PC-9 (cell line): ENCODE measurements at regions of chr17 and their contacts with region 1.

Region 1: DNA sequence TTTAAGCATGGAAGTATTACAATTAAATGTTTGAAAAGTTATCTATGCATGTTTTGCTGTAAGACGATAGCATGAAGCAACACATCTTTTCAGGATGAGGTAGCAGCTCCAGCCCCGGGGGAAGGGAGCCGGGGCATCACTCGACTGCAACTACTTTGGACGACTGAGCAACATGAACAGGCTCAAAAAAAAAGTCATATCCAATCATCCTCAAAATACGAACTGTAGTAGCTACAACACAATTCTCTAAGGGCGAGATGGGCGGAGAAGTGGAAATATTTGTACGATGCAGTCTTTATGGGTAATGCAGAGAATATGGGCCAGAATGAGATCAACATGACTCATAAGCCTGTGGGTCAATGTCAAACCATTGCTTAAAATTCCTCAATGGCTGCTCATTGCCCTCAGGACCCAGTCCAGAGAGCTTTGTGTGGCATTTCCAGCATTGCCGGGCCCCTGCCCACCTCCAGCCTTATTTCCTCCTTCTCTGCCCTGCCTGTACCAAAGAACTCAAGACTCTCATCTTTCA is 17.6 kb upstream of the SMURF2 start:
- DNase-seq: peak; percentile 81 to 98
- H3K4me3 ChIP-seq: peak overlapping the region; percentile 42; the same call in 1 of the 2 replicates
- H3K27ac ChIP-seq: peak overlapping the region; percentile 96
- H3K4me1 ChIP-seq: peaks cover 57% of the 10 kb centered on the region
- H3K27me3 ChIP-seq: no peaks in the 10 kb centered on the region
- CTCF ChIP-seq: no peak

Region 2: DNA sequence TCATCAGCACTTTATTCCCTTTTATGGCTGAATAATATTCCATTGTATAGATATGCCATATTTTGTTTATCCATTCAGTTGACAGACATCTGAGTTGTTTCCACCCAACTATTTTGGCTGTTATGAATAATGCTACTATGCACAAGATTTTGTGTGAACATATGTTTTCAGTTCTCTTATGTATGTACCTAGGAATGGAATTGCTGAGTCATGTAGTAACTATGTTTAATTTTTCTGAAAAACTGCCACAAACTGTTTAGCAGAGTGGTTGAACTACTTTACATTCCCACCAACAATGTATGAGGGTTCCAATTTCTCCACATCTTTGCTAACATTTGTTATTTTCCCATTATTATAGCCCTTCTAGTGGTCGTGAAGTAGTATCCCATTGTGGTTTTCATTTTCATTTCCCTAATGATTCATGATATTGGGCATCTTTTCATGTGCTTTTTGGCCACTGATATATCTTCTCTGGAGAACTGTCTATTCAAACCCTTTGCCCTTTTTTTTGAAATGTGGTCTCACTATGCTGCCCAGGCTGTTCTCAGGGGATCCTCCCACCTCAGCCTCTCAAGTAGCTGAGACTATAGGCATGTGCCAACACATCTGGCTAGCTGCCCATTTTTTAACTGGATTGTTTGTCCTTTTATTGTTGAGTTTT is 44.0 kb before region 1 on chr17:
- CTCF ChIA-PET with region 1: no interaction called
- POLR2A ChIA-PET with region 1: interaction called, 15 read pairs
- intact Hi-C with region 1: no loop called
- DNase-seq: peak in 1 of 2 experiments; percentile 36
- H3K4me3 ChIP-seq: no peak overlapping the region
- H3K27ac ChIP-seq: peak overlapping the region; percentile 61
- H3K4me1 ChIP-seq: peaks cover 35% of the 10 kb centered on the region
- H3K27me3 ChIP-seq: no peaks in the 10 kb centered on the region
- CTCF ChIP-seq: no peak

Region 3: GRCh38 chr17:64694207-64694606 is 14.5 kb after region 1 on chr17:
- CTCF ChIA-PET with region 1: no interaction called
- POLR2A ChIA-PET with region 1: no interaction called
- intact Hi-C with region 1: loop called (anchors 2 kb)
- DNase-seq: peak; percentile 84 to 95
- H3K4me3 ChIP-seq: no peak overlapping the region
- H3K27ac ChIP-seq: peak overlapping the region; percentile 67
- H3K4me1 ChIP-seq: peaks cover 26% of the 10 kb centered on the region
- H3K27me3 ChIP-seq: no peaks in the 10 kb centered on the region
- CTCF ChIP-seq: no peak

Region 4: GRCh38 chr17:64707019-64707591 is 27.4 kb after region 1 on chr17:
- CTCF ChIA-PET with region 1: no interaction called
- POLR2A ChIA-PET with region 1: no interaction called
- intact Hi-C with region 1: loop called (anchors 1 kb)
- DNase-seq: peak; percentile 91 to 99
- H3K4me3 ChIP-seq: peak overlapping the region; percentile 13; the same call in 1 of the 2 replicates
- H3K27ac ChIP-seq: peak overlapping the region; percentile 84
- H3K4me1 ChIP-seq: peaks cover 53% of the 10 kb centered on the region
- H3K27me3 ChIP-seq: no peaks in the 10 kb centered on the region
- CTCF ChIP-seq: no peak

Region 5: DNA sequence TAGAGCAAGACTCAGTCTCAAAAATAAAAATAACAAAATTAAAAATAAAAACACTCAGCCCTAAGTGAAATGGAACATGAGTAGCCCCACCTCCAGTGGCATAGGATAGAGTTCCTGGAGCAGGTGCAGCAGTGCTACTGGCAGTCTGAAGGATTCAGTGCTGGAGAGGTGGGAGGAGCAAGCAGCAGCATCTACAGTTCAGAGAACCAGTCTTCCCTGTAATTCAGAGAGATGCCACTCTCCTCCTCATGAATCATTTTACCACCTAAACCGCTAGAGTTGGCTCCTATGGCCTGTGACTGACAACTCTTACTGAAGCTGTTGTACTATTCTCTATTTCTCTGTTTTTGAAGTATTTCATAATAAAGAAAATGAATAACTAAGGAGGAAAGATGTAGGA is 38.3 kb after region 1 on chr17:
- CTCF ChIA-PET with region 1: no interaction called
- POLR2A ChIA-PET with region 1: interaction called, 14 read pairs
- intact Hi-C with region 1: no loop called
- DNase-seq: peak in 1 of 2 experiments; percentile 65
- H3K4me3 ChIP-seq: no peak overlapping the region
- H3K27ac ChIP-seq: no peak overlapping the region
- H3K4me1 ChIP-seq: peaks cover 3% of the 10 kb centered on the region
- H3K27me3 ChIP-seq: no peaks in the 10 kb centered on the region
- CTCF ChIP-seq: no peak